Left cardiac atrium (tissue), 4 donors: ENCODE measurements at regions of chr3 and their contacts with region 1.

Region 1: GRCh38 chr3:195616712-195617086 is 33.0 kb upstream of the APOD start:
- DNase-seq: no peak
- ATAC-seq: no peak

Region 2: DNA sequence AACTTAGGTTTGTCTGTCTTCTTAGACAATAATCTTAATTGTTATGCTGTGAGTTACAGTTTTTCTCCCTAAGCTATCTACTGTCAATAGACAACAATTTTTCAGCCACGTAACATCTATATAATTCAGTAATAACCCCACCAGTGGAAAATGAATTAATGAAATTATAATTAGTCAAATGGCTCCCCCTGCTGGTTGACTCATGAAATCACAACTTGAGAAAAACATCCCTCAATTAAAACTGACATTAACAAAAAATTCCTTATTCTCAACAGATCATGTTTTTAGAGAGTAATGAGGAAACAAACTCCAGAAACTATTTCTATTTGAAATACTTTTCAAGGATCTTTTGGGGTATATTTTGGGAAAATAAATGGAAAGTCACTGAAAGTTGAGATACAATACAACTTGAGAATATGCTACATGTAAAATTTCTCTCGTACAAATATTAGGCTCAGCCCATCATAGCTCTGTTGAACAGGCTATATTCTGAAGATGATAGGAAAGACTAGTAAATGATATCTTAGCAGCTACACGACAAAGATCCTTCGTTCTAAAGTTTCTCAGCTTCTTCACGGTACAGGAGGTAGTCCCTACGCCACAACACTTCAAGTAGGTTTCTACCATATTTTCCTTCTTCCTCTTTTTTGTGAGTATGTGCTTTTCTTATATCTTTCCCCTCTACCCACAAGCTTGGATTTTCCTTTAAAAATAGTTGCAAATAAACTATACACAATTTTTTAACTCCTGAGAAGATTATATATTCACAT is 94.3 kb before region 1 on chr3:
- intact Hi-C with region 1: no loop called
- DNase-seq: no peak
- ATAC-seq: no peak

Region 3: DNA sequence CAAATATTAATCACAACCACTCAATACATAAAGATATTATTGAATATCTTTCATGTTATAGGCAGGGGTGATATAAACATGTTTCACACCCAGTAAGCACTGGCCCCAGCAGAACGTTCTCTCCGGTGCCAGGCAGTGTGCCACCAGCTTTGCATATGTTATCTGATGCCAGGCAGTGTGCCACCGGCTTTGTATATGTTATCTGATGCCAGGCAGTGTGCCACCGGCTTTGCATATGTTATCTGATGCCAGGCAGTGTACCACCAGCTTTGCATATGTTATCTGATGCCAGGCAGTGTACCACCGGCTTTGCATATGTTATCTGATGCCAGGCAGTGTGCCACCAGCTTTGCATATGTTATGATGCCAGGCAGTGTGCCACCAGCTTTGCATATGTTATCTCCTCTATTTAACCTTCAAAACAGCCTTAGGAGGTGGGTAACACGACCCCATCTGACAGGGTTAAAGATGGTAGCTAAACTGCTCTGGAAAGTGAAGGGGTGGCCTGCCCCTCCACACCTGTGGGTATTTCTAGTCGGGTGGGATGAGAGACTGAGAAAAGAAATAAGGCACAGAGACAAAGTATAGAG is 111.0 kb after region 1 on chr3:
- intact Hi-C with region 1: loop called in 1 of 2 experiments (anchors 5 kb)
- DNase-seq: no peak
- ATAC-seq: no peak